H1 (cell line): ENCODE measurements at regions of chr1 and their contacts with region 1.

Region 1: DNA sequence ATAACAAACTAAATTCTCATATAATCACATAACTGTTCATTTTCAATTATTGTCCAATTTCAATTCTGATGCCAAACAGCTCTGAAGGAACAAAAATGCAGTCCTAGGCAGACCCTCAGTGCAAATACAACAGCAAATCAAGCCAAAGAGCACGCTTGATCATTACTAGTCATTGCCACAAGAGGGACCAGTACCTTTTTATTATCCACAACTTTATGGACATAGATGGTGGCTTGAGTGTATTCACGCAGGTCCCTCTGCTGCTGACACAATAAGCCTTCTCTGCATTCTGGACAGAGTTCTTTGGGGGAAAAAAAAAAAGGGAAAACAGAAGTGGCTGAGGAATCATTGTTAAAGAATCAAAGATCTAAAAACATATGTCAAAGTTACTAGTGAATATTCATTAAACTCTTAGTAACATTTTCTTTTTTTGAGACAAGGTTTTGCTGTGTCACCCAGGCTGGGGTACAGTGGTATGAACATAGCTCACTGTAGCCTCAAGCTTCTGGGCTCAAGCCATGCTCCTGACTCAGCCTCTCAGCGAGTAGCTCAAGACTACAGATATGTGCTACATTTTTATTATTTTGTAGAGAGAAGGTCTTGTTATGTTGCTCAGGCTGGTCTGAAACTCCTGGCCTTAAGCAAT is 34.3 kb upstream of the RAP1GAP start:
- DNase-seq: no peak
- H3K4me3 ChIP-seq: no peak overlapping the region
- H3K27ac ChIP-seq: no peak overlapping the region
- H3K4me1 ChIP-seq: peaks cover 2 to 9% (median 5%) of the 10 kb centered on the region in 4 experiments; a peak in 4 of 7 replicates
- H3K27me3 ChIP-seq: no peaks in the 10 kb centered on the region
- CTCF ChIP-seq: peak in 2 of 3 experiments; percentile 28 to 59; a peak in 2 of 4 replicates
- EP300 ChIP-seq: no peak
- POLR2A ChIP-seq: no peak
- RAD21 ChIP-seq: peak; percentile 27 to 40; a peak in 3 of 4 replicates

Region 2: GRCh38 chr1:21716169-21716568 is 12.7 kb after region 1 on chr1:
- CTCF ChIA-PET with region 1: interaction called, 13 read pairs
- POLR2A ChIA-PET with region 1: no interaction called
- DNase-seq: no peak
- H3K4me3 ChIP-seq: no peak overlapping the region
- H3K27ac ChIP-seq: no peak overlapping the region
- H3K4me1 ChIP-seq: no peaks in the 10 kb centered on the region
- H3K27me3 ChIP-seq: no peaks in the 10 kb centered on the region
- CTCF ChIP-seq: no peak
- EP300 ChIP-seq: no peak
- POLR2A ChIP-seq: no peak
- RAD21 ChIP-seq: no peak

Region 3: DNA sequence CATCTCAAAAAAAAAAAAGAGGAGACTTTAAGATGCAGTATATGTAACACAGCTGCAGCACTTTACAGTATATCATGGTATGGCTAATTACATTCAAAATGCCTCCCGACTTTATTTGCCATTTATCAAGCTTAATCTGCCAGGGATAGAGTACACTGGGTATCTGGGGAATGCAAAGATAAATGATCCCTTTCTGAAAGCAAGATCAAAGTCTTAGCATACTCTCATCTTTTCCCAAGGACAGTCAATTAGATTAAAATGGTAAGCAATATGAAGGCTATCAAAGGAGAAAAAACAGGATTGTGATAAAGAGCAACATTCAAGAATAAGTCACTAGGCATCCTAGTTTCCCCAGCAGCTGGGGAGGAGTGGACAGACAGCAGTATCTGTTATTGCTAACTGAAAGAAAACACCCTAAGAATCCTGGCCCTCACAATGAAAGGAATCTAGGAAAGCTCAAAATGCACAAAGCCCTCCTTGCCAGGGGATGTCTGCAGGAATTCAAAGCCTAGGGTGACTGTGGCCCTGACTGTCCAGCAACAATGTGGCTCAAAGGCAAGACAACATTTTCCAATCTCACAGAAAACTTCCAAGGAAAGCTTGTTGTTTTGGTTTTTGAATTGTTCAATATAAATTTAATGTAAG is 22.4 kb after region 1 on chr1:
- CTCF ChIA-PET with region 1: interaction called, 11 read pairs
- POLR2A ChIA-PET with region 1: interaction called, 3 read pairs
- DNase-seq: no peak
- H3K4me3 ChIP-seq: no peak overlapping the region
- H3K27ac ChIP-seq: no peak overlapping the region
- H3K4me1 ChIP-seq: no peaks in the 10 kb centered on the region
- H3K27me3 ChIP-seq: no peaks in the 10 kb centered on the region
- CTCF ChIP-seq: no peak
- EP300 ChIP-seq: no peak
- POLR2A ChIP-seq: no peak
- RAD21 ChIP-seq: no peak